MCF 10A (cell line): ENCODE measurements at regions of chr19 and their contacts with region 1.

Region 1: GRCh38 chr19:3163230-3163886 is 15.2 kb upstream of the S1PR4 start:
- DNase-seq: peak; percentile 66
- H3K4me3 Mint-ChIP-seq: no peak overlapping the region
- H3K27ac Mint-ChIP-seq: no peak overlapping the region
- H3K4me1 Mint-ChIP-seq: peaks cover 5% of the 10 kb centered on the region
- H3K27me3 Mint-ChIP-seq: no peaks in the 10 kb centered on the region
- CTCF ChIP-seq: peak; percentile 93

Region 2: GRCh38 chr19:3132971-3133792 is 30.2 kb before region 1 on chr19:
- CTCF ChIA-PET with region 1: interaction called, 70 read pairs
- POLR2A ChIA-PET with region 1: interaction called, 16 read pairs
- intact Hi-C with region 1: loop called (anchors 1 kb)
- DNase-seq: no peak
- H3K4me3 Mint-ChIP-seq: no peak overlapping the region
- H3K27ac Mint-ChIP-seq: no peak overlapping the region
- H3K4me1 Mint-ChIP-seq: no peaks in the 10 kb centered on the region
- H3K27me3 Mint-ChIP-seq: no peaks in the 10 kb centered on the region
- CTCF ChIP-seq: no peak

Region 3: DNA sequence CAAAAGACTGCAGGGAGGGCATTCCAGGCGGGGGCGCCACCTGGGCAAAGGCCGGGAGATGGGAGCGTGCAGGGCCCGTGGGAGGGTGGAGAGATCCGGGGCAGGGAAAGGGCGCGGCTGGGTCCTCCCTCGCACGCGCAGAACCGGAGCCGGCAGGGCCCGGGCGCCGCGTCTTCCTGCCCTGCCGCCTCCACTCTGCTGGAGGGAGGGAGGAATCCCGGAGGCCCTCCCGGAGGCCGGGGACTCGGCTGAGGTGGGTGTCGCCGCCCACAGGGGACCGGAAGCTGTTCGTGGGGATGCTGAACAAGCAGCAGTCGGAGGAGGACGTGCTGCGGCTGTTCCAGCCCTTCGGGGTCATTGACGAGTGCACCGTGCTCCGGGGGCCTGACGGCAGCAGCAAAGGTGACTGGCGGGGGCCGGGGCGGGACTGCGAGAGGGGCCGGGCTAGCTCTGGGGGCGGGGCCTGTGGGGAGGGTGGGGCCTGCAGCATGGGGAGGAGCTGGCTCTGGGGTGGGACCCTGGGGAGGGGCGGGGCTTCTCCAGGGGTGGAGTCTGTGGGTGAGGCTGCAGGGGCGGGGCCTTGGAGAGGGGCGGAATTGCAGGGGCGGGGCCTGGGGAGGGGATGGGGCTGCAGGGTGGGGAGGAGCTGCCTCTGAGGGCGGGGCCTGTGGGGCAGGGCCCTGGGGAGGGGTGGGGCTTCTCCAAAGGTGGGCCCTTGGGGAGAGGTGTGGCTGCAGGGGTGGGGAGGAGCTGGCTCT is 112.4 kb after region 1 on chr19:
- CTCF ChIA-PET with region 1: no interaction called
- POLR2A ChIA-PET with region 1: no interaction called
- intact Hi-C with region 1: no loop called
- DNase-seq: peak; percentile 91
- H3K4me3 Mint-ChIP-seq: peak overlapping the region; percentile 77
- H3K27ac Mint-ChIP-seq: no peak overlapping the region
- H3K4me1 Mint-ChIP-seq: no peaks in the 10 kb centered on the region
- H3K27me3 Mint-ChIP-seq: peaks cover 40% of the 10 kb centered on the region
- CTCF ChIP-seq: no peak